HEK293 (cell line): ENCODE measurements at regions of chr3 and their contacts with region 1.

Region 1: DNA sequence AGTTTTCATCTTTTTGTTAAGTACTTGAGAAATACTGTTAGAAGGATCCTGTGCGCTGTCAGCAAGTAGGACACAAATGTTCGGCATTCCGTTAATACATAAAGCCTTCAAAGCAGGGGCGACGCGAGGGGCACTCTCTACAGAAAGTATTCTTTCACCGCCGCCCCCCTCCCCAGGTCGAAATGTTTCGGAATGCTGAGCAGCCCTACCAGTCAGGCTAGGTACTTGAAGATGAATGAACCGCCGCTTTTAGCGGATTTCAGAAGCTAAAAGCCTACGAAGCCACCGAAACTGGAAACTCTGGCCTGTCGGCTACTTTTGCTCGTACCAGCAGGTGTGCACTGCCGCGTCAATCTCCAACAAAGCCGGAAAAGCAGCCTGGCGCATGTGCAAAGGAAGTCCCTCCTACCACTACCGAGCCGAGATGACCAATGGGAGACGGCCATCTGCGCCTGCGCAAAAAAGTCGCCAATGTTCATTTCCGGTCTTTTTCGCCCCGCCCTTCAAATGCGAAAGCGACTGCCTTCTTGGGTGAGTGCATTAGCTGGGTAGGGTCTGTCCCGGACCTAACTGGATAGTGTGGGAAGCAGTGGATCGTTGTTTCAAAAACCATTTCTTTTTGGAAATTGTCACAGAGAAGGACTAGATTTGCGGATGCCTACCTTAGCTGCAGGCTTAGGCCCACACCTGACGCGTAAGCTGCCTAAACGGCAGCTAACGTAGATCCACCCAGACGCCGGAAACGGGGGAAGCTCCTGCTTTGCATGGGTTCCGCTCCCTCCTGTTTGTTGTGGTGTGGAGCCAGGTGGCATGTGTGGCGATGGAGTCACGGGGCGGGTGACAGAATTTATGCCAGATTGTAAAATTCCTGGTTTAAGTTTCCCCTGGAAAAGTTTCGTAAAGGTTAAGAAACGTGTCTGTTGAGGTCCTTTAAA is at the start of gene WDR5B:
- H3K4me3 ChIP-seq: peak within 1 kb of the TSS; percentile 79
- H3K27ac ChIP-seq: peak within 1 kb of the TSS; percentile 76
- H3K4me1 ChIP-seq: no peaks in the 10 kb centered on the region
- CTCF ChIP-seq: 0 out of 2 replicates have a peak, but pooled peaks have one; percentile 12

Region 2: GRCh38 chr3:122004991-122005565 is 410.9 kb before region 1 on chr3:
- CTCF ChIA-PET with region 1: no interaction called
- POLR2A ChIA-PET with region 1: no interaction called
- H3K4me3 ChIP-seq: no peak overlapping the region
- H3K27ac ChIP-seq: no peak overlapping the region
- H3K4me1 ChIP-seq: no peaks in the 10 kb centered on the region
- CTCF ChIP-seq: no peak

Region 3: DNA sequence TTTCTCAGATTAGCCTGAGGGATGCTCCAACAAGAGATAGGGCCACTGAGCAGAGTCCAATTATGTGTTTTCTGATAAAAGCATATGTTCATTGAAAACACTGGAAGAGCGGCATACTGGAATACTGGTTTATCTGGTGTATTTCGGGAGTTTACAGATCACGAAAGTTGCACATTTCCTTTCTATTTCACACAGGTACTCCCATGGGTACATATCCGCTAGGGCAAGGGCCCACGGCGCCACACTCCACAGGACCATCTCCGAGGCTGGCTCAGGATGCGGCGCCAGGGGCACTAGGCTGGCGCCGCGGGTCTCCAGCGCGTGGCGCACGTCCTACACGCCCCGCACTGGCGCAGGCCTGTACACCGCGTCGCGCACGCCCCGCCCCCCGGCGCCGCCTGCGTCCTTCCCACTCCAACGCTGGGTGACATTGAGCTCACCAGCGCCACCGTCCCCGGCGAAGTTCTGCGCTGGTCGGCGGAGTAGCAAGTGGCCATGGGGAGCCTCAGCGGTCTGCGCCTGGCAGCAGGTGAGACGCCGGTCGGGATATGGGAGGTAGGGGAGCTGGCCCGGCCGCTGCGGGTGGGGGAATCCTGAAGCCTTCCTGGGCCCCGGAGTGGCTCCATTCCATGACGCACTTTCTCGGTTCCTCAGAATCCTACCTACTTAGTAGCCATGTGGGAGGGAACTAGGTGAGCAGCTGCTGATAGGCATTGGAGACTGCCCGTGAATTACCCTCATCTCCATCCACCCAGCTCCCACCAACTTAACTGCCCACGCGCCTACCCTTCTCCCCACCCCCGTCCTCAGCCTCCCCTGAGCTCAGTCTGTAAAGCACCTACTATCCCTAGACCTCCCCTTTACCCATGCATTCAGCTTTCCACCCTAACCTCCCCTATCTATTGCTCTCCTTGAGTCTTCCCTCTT is 32.0 kb before region 1 on chr3 and contains the start of gene FAM162A:
- CTCF ChIA-PET with region 1: no interaction called
- POLR2A ChIA-PET with region 1: interaction called, 24 read pairs
- H3K4me3 ChIP-seq: peak within 1 kb of the TSS; percentile 96
- H3K27ac ChIP-seq: peak within 1 kb of the TSS; percentile 66
- H3K4me1 ChIP-seq: no peaks in the 10 kb centered on the region
- CTCF ChIP-seq: peak; percentile 94